ENCODE measurements at regions of chr7 and their contacts with region 1.

Region 1: DNA sequence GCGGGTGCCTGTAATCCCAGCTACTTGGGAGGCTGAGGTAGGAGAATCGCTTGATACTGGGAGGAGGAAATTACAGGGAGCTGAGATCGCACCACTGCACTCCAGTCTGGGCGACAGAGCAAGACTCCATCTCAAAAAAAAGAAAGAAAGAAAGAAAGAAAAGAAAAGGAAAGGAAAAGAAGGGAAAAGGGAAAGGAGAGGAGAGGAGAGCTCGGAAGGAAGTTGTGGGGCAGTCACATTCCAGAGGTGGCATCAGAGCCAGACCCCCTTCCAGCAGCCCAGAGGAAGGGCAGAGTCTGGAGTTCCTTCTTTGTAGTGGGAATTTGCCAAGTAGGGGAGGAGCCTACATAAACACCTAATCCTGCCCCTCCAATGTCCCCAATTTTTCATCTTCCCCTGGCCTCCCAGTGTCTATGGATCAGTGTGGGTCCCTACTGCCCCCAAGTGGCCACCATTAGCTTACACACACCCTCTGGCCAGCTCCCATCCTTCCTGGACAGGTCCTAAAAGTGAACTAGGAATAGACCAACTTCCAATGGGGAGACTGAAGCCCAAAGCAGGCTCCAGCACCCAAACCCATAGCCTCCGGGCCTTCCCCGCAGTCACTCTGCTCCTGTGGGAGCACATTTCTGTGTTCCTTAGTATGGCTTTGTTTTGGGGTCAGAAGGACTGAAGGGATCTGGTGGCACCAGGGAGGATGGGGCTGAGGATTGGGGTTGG is 39.6 kb upstream of the HSPB1 start:
- DNase-seq: peak; percentile 48
- H3K4me3 ChIP-seq: no peak overlapping the region
- H3K27ac ChIP-seq: no peak overlapping the region
- H3K4me1 ChIP-seq: peaks cover 5% of the 10 kb centered on the region
- H3K27me3 ChIP-seq: peaks cover 5% of the 10 kb centered on the region
- CTCF ChIP-seq: peak; percentile 79 to 90

Region 2: GRCh38 chr7:76179686-76180085 is 83.2 kb before region 1 on chr7:
- CTCF ChIA-PET with region 1: no interaction called
- dilution Hi-C with region 1: no loop called
- in situ Hi-C with region 1: loop called in 1 of 2 experiments (anchors 5 kb)
- intact Hi-C with region 1: loop called (anchors 1 kb)
- DNase-seq: no peak
- H3K4me3 ChIP-seq: no peak overlapping the region
- H3K27ac ChIP-seq: no peak overlapping the region
- H3K4me1 ChIP-seq: peaks cover 3% of the 10 kb centered on the region
- H3K27me3 ChIP-seq: no peaks in the 10 kb centered on the region
- CTCF ChIP-seq: no peak

Region 3: DNA sequence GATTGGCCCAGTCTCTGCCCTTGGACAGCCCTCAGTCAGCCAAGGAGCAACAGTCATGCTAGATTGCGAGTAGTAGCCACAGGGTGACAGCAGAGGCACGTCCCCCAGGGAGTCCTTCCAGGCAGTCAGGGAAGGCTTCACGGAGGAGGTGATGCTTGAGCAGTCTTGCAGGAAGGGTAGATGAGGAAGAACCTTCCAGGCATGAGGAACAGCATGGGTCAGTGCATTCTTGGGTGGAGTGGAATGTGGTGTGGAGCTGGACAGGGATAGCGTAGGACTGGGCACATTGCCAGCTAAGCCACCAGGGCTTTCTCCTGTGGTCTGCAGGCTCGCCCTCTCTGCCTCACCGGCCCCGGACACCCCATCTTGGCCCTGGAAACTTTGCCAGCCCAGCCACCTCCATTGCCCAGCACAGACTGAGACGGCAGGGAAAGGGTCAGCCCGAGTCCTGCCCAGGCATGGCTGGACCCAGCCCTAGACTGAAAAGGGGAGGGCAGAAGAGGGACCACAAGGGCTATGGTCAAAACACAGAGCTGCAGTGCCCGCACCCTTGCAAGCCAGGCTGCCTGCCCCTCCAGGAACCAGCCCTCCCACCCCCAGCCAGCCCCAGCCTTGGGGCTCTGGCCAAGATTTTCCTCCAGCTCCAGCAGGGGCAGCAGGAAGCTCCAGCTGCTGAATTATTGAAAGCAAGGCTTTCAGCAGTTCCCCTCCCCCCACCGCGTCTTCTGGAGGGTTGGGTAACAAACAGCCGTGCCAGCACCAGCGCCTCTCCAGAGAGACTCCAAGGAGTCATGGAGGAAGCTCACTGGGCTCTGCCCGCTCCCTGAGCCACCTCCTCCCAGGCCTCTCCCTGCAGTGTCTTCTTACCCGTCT is 42.4 kb before region 1 on chr7:
- CTCF ChIA-PET with region 1: no interaction called
- dilution Hi-C with region 1: loop called (anchors 5 kb)
- in situ Hi-C with region 1: no loop called
- intact Hi-C with region 1: loop called (anchors 5 kb)
- DNase-seq: peak; percentile 24
- H3K4me3 ChIP-seq: no peak overlapping the region
- H3K27ac ChIP-seq: no peak overlapping the region
- H3K4me1 ChIP-seq: peaks cover 6% of the 10 kb centered on the region
- H3K27me3 ChIP-seq: no peaks in the 10 kb centered on the region
- CTCF ChIP-seq: peak in 1 of 2 donors; percentile 7

Region 4: DNA sequence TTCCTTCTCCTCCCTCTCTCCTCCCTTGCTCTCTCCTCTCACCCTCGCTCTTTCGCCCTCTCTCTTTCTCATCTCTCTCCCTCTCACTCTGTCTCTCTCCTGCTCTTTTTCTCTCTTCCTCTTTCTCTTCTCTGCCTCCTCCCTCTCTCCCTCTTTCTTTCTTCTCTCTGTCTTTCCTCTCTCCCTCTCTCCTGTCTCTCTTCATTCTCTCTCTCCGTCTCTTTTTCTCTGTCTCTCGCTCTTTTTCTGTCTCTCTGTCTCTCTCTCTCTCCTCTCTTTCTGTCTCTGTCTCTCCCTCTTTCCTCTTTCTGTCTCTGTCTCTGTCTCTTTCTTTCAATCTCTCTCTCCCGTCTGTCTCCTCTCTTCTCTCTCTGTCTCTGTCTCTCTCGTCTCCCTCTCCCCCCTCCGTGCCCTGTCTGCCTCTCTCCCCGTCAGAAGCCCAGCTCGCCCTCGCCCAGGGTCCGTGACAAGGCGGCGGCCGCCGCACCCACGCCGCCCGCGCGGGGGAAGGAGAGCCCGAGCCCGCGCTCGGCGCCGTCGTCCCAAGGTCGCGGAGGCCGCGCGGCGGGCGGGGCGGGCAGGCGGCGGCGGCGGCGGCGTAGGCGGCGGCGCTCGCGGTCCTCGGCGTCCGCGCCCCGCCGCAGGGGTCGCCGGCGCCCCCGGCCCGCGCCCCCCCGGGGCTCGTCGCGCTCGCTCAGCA is 18.3 kb after region 1 on chr7:
- CTCF ChIA-PET with region 1: no interaction called
- dilution Hi-C with region 1: no loop called
- in situ Hi-C with region 1: no loop called
- intact Hi-C with region 1: no loop called
- DNase-seq: no peak
- H3K4me3 ChIP-seq: peak overlapping the region; percentile 8 to 39 (median 39)
- H3K27ac ChIP-seq: no peak overlapping the region
- H3K4me1 ChIP-seq: no peaks in the 10 kb centered on the region
- H3K27me3 ChIP-seq: peaks cover 9% of the 10 kb centered on the region
- CTCF ChIP-seq: no peak

Region 5: DNA sequence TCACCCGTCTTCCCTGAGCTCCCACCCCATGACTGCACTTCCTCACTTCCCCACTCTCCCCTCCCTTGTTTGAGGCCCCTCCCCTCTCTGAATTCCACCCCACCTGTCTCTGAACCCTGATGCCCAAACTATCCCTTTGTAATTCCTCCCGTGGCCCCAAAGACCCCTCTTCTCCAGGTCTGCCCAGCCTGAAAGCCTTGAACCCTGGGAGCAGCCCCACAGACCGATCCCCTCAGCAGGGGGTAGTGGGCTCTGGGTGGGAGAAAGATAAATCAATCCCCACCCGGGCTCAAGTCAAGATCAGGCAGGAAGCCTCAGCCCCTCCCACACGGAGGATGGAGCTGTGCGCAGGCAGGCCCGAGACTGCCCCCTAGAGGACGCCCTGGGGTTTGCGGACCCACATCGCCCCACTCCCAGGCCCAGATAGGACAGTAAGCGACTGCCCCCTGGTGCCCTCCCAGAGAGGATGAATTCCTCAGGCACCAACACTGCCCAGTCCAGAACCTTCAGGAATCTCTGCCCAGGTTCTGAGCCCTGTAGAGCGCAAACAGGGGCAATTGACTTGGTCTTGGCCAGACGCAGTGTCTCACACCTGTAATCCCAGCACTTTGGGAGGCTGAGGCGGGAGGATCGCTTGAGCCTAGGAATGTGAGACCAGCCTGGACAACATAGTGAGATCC is 51.3 kb after region 1 on chr7:
- CTCF ChIA-PET with region 1: no interaction called
- dilution Hi-C with region 1: no loop called
- in situ Hi-C with region 1: loop called in 1 of 2 experiments (anchors 5 kb)
- intact Hi-C with region 1: loop called (anchors 1 kb)
- DNase-seq: peak; percentile 79
- H3K4me3 ChIP-seq: no peak overlapping the region
- H3K27ac ChIP-seq: no peak overlapping the region
- H3K4me1 ChIP-seq: peaks cover 24% of the 10 kb centered on the region
- H3K27me3 ChIP-seq: no peaks in the 10 kb centered on the region
- CTCF ChIP-seq: peak; percentile 96 to 100

Region 6: DNA sequence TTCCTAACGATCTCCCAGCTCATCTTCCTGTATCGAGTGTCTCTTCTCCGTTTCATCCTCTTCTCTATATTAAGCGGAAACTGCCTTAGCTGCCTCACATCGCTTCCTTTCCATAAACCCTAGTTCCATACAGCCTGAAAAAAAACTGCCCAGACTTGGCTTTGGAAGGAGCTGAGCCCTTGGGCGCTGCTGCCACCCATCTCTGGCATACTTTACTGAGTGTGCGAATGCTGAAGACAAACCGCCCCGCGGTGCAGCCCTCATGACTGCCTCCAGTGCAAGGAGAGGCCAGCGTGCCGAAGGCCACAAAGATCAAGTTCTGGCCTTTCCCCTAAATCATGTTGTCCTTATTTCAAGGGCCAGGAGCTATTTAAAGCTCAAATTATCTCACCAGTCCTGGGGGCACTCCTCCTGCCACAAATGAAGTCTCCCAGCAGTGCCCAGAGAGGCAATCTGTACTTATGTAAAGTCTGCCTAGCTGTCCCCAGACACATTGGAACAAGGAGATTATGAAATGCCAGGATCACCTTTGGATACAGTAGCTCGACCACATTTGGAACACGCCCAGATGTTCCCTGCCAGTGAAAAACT is 70.8 kb after region 1 on chr7:
- CTCF ChIA-PET with region 1: interaction called, 10 read pairs
- dilution Hi-C with region 1: no loop called
- in situ Hi-C with region 1: no loop called
- intact Hi-C with region 1: no loop called
- DNase-seq: no peak
- H3K4me3 ChIP-seq: no peak overlapping the region
- H3K27ac ChIP-seq: no peak overlapping the region
- H3K4me1 ChIP-seq: peaks cover 10% of the 10 kb centered on the region
- H3K27me3 ChIP-seq: no peaks in the 10 kb centered on the region
- CTCF ChIP-seq: no peak